Activated naive CD4-positive, alpha-beta T cell treated with anti-CD3 and anti-CD28 coated beads for 36 hours (primary cell): ENCODE measurements at regions of chr1 and their contacts with region 1.

Region 1: DNA sequence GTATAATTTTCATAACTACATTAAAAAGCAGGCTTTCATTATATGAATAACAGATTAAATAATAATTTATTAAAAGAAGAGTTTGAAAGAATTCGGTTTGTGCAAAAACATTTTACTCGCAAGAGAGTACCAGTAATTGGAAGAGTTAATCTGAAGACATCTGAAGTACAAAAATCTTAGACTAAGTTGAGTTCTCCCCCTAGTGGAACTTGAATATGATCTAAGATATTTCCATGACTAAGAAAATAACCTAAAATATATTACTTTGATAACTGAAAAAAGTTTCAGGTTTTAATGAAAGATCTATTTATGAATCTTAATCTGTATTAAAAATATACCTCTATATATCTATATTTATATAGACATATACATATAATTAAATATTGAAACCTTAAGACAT is 112.5 kb upstream of the GFI1 start:
- DNase-seq: no peak
- H3K4me3 Mint-ChIP-seq: no peak overlapping the region
- H3K27ac Mint-ChIP-seq: no peak overlapping the region
- H3K4me1 Mint-ChIP-seq: peaks cover 32% of the 10 kb centered on the region
- H3K27me3 Mint-ChIP-seq: no peaks in the 10 kb centered on the region

Region 2: GRCh38 chr1:91997607-91998195 is 601.5 kb before region 1 on chr1:
- CTCF ChIA-PET with region 1: interaction called, 4 read pairs
- intact Hi-C with region 1: loop called (anchors 1 kb)
- DNase-seq: peak; percentile 71
- H3K4me3 Mint-ChIP-seq: no peak overlapping the region
- H3K27ac Mint-ChIP-seq: no peak overlapping the region
- H3K4me1 Mint-ChIP-seq: no peaks in the 10 kb centered on the region
- H3K27me3 Mint-ChIP-seq: no peaks in the 10 kb centered on the region

Region 3: GRCh38 chr1:92136341-92136740 is 462.8 kb before region 1 on chr1:
- CTCF ChIA-PET with region 1: no interaction called
- intact Hi-C with region 1: no loop called
- DNase-seq: no peak
- H3K4me3 Mint-ChIP-seq: no peak overlapping the region
- H3K27ac Mint-ChIP-seq: no peak overlapping the region
- H3K4me1 Mint-ChIP-seq: no peaks in the 10 kb centered on the region
- H3K27me3 Mint-ChIP-seq: no peaks in the 10 kb centered on the region

Region 4: DNA sequence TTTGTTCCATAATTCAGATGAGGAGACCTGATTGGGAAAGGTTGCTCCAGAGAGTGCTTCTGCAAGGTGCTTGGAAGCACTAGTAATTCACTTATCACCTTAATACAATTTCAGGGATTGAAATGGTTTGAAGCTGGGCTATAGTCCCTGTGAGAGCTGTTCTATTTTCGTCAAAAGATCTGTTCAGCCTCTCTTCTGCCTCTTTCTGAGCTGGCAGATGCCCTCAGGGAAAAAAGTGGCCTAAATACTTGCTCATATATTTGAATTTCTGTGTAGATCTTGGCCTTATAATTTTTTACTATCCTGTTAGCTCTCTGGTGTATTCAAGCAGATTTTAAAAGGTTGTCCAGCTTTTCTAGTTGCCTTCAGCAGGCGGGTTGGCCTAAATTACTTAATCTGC is 359.1 kb before region 1 on chr1:
- CTCF ChIA-PET with region 1: no interaction called
- intact Hi-C with region 1: no loop called
- DNase-seq: no peak
- H3K4me3 Mint-ChIP-seq: no peak overlapping the region
- H3K27ac Mint-ChIP-seq: no peak overlapping the region
- H3K4me1 Mint-ChIP-seq: no peaks in the 10 kb centered on the region
- H3K27me3 Mint-ChIP-seq: no peaks in the 10 kb centered on the region

Region 5: GRCh38 chr1:92310185-92310597 is 289.0 kb before region 1 on chr1:
- CTCF ChIA-PET with region 1: interaction called, 10 read pairs
- intact Hi-C with region 1: loop called (anchors 1 kb)
- DNase-seq: no peak
- H3K4me3 Mint-ChIP-seq: no peak overlapping the region
- H3K27ac Mint-ChIP-seq: no peak overlapping the region
- H3K4me1 Mint-ChIP-seq: peaks cover 37% of the 10 kb centered on the region
- H3K27me3 Mint-ChIP-seq: no peaks in the 10 kb centered on the region

Region 6: GRCh38 chr1:92461364-92462097 is 137.7 kb before region 1 on chr1:
- CTCF ChIA-PET with region 1: interaction called, 6 read pairs
- intact Hi-C with region 1: loop called (anchors 1 kb)
- DNase-seq: no peak
- H3K4me3 Mint-ChIP-seq: no peak overlapping the region
- H3K27ac Mint-ChIP-seq: no peak overlapping the region
- H3K4me1 Mint-ChIP-seq: peaks cover 50% of the 10 kb centered on the region
- H3K27me3 Mint-ChIP-seq: no peaks in the 10 kb centered on the region

Region 7: GRCh38 chr1:92519043-92519442 is 80.1 kb before region 1 on chr1:
- CTCF ChIA-PET with region 1: no interaction called
- intact Hi-C with region 1: no loop called
- DNase-seq: no peak
- H3K4me3 Mint-ChIP-seq: no peak overlapping the region
- H3K27ac Mint-ChIP-seq: no peak overlapping the region
- H3K4me1 Mint-ChIP-seq: peaks cover 18% of the 10 kb centered on the region
- H3K27me3 Mint-ChIP-seq: no peaks in the 10 kb centered on the region

Region 8: DNA sequence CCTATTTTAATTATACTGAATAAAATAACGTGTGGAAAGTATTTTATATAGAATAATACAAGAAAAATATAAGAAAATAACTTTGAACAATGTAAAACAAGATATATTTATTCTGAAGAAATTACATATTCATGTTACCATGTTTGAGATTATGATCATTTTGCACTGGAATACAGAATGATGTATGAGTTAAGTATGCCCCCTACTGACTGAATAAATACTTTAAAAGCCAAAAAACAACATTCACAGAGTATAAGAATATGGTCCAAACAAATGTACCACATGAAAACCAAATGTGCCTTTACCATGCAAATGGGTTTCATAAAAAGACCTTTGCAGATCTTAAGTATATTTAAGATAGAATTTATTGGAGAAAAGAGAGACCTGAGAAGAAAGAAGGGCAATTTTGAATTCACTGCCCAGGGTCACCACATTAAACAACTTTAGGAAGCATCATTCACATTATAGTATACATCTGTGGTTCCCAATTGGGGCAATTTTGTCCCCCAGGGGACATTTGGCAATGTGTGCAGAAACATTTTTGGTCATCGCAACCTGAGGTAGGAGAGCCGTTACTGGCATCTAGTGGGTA is 24.1 kb after region 1 on chr1:
- CTCF ChIA-PET with region 1: interaction called, 3 read pairs
- intact Hi-C with region 1: loop called (anchors 2 kb)
- DNase-seq: no peak
- H3K4me3 Mint-ChIP-seq: no peak overlapping the region
- H3K27ac Mint-ChIP-seq: no peak overlapping the region
- H3K4me1 Mint-ChIP-seq: peaks cover 16% of the 10 kb centered on the region
- H3K27me3 Mint-ChIP-seq: no peaks in the 10 kb centered on the region